ENCODE measurements at regions of chr11 and their contacts with region 1.

Region 1: DNA sequence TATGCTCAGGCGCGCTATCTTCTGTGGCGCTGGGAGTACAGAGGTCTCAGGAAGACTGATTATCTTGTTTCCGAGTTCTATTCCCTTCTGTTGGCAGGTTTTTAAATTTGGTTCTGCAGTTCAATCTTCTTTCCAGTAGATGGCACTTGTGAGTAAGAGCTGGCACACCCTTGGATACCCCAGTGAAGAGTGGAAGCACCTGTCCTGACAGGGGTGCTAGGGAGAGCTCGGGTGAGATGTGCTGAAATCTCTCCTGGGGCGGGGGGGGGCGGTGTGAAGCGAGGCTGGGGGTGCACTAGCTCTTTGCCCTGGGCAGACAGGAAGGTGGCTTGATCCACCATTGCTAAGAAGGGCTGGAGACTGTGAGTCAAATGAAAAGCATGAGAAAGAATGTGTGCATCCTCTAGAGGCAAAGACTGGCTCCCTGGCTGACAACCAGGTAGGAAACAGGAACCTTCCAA is 679.9 kb upstream of the CCDC179 start:
- DNase-seq: peak; percentile 66
- H3K4me3 ChIP-seq: peak overlapping the region in 1 of 2 experiments; percentile 35; a peak in 1 of 4 replicates
- H3K27ac ChIP-seq: no peak overlapping the region
- H3K4me1 ChIP-seq: no peaks in the 10 kb centered on the region; a peak in 1 of 4 replicates
- H3K27me3 ChIP-seq: no peaks in the 10 kb centered on the region
- CTCF ChIP-seq: peak; percentile 68
- EP300 ChIP-seq: no peak
- RAD21 ChIP-seq: peak; percentile 84

Region 2: DNA sequence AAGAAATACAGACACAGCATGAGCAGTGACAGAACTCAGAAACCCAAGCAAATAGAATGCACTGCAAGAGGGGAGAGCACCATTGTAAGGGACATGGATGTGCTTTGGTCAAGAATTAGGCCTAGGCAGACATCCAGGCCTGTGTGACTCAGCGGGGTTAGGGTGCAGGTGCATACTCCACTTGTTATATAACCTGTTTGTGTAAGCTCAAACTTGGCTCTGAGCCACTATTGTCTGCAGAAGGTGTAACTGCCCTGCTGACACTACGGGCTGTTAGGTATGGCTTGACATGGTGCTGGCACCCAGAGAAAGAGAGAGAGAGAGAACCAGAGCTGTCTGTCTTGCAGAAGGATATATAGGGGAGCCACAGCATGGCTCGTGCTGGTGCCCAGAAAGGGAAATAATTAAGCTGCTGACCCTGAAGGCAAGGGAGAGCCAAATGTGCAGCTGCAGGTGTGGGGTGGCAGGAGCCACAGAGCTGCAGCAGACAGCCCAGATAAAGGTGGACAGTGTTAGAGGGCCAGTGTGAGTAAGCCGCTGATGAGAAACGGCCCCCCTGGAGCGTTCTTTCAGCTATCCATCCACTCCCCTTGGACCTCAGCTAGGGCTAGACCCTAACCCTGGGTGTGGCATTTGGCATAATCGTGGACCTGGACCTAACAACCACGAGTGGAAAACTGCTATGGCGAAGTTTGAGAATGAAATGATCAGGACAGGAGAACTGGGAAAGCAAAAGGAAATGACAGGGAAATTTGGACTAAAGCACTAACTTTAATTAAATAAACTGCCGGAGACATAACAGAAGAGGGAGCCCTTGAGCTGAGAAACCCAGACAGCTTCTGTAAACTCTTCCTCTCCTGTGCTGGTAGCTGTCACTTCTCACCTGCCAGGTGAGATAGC is 426.9 kb before region 1 on chr11:
- CTCF ChIA-PET with region 1: interaction called, 26 read pairs
- POLR2A ChIA-PET with region 1: no interaction called
- DNase-seq: peak; percentile 46
- H3K4me3 ChIP-seq: no peak overlapping the region; a peak in 1 of 4 replicates
- H3K27ac ChIP-seq: no peak overlapping the region
- H3K4me1 ChIP-seq: peaks cover 4% of the 10 kb centered on the region in 2 experiments; a peak in 2 of 4 replicates
- H3K27me3 ChIP-seq: no peaks in the 10 kb centered on the region
- CTCF ChIP-seq: peak; percentile 84
- EP300 ChIP-seq: 0 out of 4 replicates have a peak, but pooled peaks of 1 of the 2 experiments have one; percentile 14
- RAD21 ChIP-seq: peak; percentile 89

Region 3: DNA sequence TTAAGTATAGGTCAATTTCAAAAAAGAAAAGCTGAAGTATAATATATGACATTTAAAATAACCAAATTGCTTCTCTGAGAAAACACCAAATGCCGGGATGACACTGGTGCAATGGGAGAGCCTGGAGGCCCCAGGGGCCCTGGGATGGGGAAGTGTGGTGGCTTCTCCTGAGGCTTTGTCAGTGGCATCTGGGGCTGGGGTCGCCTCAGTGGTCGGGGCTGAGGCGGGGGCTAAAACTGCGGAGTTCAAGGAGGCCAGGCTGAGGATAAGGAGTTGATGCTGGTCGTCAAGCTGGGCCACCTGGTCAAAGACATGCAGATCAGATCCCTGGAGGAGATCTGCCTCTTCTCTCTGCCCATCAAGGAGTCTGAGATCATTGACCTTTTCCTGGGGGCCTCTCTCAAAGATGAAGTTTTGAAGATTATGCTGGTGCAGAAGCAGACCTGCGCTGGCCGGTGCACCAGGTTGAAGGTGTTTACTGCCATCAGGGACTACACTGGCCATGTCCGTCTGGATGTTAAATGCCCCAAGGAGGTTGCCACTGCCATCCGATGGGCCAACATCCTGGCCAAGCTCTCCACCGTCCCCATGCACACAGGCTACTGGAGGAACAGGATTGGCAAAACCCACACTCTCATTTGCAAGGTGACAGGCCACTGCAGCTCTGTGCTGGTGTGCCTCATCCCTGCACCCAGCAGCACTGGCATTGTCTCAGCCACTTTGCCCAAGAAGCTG is 19.7 kb before region 1 on chr11:
- CTCF ChIA-PET with region 1: interaction called, 22 read pairs
- POLR2A ChIA-PET with region 1: no interaction called
- DNase-seq: no peak
- H3K4me3 ChIP-seq: no peak overlapping the region
- H3K27ac ChIP-seq: no peak overlapping the region
- H3K4me1 ChIP-seq: no peaks in the 10 kb centered on the region
- H3K27me3 ChIP-seq: no peaks in the 10 kb centered on the region
- CTCF ChIP-seq: no peak
- EP300 ChIP-seq: no peak
- RAD21 ChIP-seq: no peak

Region 4: DNA sequence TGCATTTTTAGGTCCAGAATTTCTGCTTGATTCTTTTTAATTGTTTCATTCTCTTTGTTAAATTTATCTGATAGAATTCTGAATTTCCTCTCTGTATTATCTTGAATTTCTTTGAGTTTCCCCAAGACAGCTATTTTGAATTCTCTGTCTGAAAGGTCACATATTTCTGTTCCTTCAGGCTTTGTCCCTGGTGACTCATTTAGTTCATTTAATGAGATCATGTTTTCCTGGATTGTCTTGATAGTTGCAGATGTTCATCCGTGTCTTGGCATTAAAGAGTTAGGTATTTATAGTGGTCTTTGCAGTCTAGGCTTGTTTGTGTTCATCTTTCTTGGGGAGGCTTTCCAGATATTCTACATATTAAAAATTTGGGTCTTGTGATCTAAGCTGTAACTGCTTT is 15.0 kb after region 1 on chr11:
- CTCF ChIA-PET with region 1: interaction called, 10 read pairs
- POLR2A ChIA-PET with region 1: no interaction called
- DNase-seq: no peak
- H3K4me3 ChIP-seq: no peak overlapping the region
- H3K27ac ChIP-seq: no peak overlapping the region
- H3K4me1 ChIP-seq: no peaks in the 10 kb centered on the region
- H3K27me3 ChIP-seq: no peaks in the 10 kb centered on the region
- CTCF ChIP-seq: no peak
- EP300 ChIP-seq: no peak
- RAD21 ChIP-seq: no peak

Region 5: DNA sequence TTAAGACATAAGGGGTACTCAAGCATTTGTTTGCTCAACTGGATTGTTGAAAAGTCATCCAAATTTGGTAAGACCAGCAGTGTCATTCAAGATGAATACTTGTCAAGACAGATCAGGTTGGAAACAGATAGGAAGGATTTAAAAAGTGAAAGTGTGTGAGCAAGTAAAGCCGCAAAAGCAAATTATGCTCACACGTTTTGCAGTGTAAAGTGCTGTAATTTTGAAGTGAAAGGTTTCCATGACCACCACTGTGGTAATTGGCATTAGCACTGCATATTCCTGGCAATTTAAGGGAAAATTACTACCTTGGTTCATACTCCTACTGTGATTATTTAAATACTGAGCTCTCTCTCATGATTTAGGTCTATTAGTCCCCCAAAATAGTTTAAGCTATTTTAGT is 24.2 kb after region 1 on chr11:
- CTCF ChIA-PET with region 1: interaction called, 10 read pairs
- POLR2A ChIA-PET with region 1: no interaction called
- DNase-seq: no peak
- H3K4me3 ChIP-seq: no peak overlapping the region
- H3K27ac ChIP-seq: no peak overlapping the region
- H3K4me1 ChIP-seq: no peaks in the 10 kb centered on the region
- H3K27me3 ChIP-seq: no peaks in the 10 kb centered on the region
- CTCF ChIP-seq: no peak
- EP300 ChIP-seq: no peak
- RAD21 ChIP-seq: no peak

Region 6: DNA sequence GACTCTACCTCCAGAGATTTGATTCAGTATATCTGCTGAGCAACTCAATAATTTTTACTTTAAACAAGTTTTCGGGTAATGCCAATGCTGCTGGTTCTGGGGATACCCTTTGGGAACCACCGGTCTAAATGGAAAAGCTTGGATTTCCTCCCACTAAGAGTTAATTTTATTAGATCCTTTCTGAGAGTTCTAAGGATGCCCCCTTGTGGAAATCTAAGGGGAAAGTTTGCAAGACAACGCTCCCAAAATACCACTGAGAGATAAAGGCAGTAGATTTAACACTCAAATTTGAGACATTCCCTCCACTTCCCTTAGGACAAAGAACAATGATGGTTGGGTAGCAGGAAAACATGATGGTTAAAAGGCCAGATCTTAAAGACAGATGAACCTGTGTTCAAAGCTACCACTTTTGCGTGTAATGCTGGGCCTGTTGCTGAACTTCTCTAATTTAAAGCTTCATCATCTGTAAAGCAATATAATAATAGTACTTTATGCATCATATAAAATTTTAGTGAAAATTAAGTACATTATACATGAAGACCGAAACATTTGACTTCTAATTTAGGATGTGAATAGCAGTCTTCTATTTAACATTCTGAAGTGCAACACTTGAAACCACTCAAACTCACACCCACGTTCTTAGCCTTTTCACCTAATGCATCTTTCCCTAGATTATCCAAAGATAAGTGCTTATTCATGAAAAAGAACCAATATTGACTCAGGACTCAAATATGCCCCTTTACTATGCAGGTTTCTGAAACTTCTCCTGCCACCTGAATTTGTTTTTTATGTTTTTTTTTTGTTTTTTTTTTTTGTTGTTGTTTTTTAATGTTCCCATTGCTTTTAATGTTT is 846.6 kb after region 1 on chr11:
- CTCF ChIA-PET with region 1: interaction called, 10 read pairs
- POLR2A ChIA-PET with region 1: no interaction called
- DNase-seq: peak; percentile 13
- H3K4me3 ChIP-seq: no peak overlapping the region; a peak in 1 of 4 replicates
- H3K27ac ChIP-seq: no peak overlapping the region
- H3K4me1 ChIP-seq: peaks cover 0 to 3% of the 10 kb centered on the region in 2 experiments; a peak in 2 of 4 replicates
- H3K27me3 ChIP-seq: no peaks in the 10 kb centered on the region
- CTCF ChIP-seq: peak; percentile 62
- EP300 ChIP-seq: no peak
- RAD21 ChIP-seq: peak; percentile 68

Measured in SK-N-SH (cell line).